ENCODE measurements at regions of chr1 and their contacts with region 1.

Region 1: GRCh38 chr1:40315239-40315794 is 1.8 kb downstream of the COL9A2 start:
- DNase-seq: peak; percentile 84 to 86 (median 85)
- H3K4me3 ChIP-seq: peak overlapping the region; percentile 65 to 74
- H3K4me3 Mint-ChIP-seq: peak overlapping the region; percentile 79 to 95 (median 87)
- H3K27ac ChIP-seq: no peak overlapping the region
- H3K27ac Mint-ChIP-seq: peak overlapping the region in 6 of 7 donors; percentile 15 to 72 (median 46)
- H3K4me1 ChIP-seq: peaks cover 44% of the 10 kb centered on the region
- H3K4me1 Mint-ChIP-seq: peaks cover 14 to 67% (median 35%) of the 10 kb centered on the region in 4 donors
- H3K27me3 ChIP-seq: no peaks in the 10 kb centered on the region
- H3K27me3 Mint-ChIP-seq: peaks cover 10 to 18% of the 10 kb centered on the region in 2 donors

Region 2: DNA sequence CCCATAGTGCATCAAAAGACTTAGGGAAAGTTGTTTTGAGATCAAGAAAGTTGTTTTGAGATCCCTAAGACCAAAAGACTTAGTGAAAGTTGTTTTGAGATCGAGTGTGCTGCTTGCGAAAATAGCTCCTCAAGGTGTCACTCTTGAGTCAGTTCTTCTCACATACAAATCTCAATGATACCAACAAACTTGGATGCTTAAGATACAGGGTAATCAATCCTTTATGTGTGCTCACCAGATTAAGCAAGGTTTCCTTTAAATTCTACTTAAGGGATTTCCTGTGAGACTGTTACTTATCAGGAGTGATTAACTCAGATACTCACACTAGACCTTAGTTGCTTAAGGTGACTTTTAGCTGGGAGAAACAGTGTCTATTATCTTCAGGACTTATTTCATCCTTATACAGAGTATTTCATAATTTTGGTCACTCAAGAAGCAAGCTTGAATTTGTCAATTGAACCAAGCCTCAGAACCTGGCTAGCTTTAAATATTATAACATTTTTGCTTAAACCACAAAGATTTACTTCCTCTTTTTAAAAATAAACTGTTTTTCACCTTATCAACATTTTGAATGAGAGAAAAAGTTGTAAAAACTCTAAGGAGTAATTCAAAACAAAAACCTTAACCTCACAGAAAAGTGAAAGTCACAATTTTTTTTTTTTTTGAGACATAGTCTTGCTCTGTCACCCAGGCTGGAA is 162.1 kb before region 1 on chr1:
- CTCF ChIA-PET with region 1: interaction called, 60 read pairs
- POLR2A ChIA-PET with region 1: interaction called, 8 read pairs
- intact Hi-C with region 1: loop called (anchors 1 kb)
- DNase-seq: peak; percentile 38 to 58 (median 53)
- H3K4me3 ChIP-seq: no peak overlapping the region
- H3K4me3 Mint-ChIP-seq: peak overlapping the region in 5 of 8 donors; percentile 12 to 36 (median 26)
- H3K27ac ChIP-seq: no peak overlapping the region
- H3K27ac Mint-ChIP-seq: peak overlapping the region in 6 of 7 donors; percentile 25 to 77 (median 56)
- H3K4me1 ChIP-seq: no peaks in the 10 kb centered on the region
- H3K4me1 Mint-ChIP-seq: peaks cover 4 to 10% (median 5%) of the 10 kb centered on the region in 4 donors
- H3K27me3 ChIP-seq: no peaks in the 10 kb centered on the region
- H3K27me3 Mint-ChIP-seq: peaks cover 2 to 10% of the 10 kb centered on the region in 2 donors

Region 3: DNA sequence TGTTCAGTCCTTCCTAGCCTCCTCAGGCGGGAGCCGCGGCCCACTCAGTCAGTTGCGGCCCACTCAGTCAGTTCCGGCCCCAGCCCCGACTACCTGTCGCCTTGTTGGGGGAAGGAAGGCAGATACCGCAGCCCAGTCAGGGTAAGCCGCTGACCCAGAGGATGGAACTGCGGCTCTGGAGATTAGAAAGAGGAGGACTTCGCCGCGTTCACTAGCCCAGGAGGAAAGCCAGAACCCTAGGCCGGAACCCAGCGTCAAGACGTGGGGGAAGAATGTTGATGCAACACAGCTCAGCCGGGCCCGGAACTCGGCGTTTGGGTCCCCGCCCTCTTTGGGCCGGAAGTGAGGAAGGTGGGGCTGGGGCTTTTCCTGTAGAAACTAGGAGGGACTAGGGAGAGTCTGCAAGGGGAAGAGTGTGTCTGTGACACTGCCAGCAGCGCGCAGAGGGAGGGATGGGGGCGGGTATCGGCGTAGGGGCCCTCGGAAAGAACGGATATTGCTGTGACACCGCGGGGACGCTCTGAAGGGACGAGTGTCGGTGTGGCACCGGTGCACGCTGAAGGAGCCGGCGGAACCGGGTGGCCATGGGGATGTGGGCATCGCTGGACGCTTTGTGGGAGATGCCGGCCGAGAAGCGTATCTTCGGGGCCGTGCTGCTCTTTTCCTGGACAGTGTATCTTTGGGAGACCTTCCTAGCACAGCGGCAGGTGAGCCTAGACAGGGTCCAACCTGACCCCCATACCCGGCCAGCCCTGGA is 57.5 kb before region 1 on chr1 and contains the start of gene ZMPSTE24:
- CTCF ChIA-PET with region 1: interaction called, 3 read pairs
- POLR2A ChIA-PET with region 1: interaction called, 8 read pairs
- intact Hi-C with region 1: loop called (anchors 1 kb)
- DNase-seq: peak; percentile 95 to 99 (median 96)
- H3K4me3 ChIP-seq: peak within 1 kb of the TSS; percentile 86 to 99
- H3K4me3 Mint-ChIP-seq: peak within 1 kb of the TSS; percentile 92 to 99 (median 96)
- H3K27ac ChIP-seq: peak within 1 kb of the TSS; percentile 98
- H3K27ac Mint-ChIP-seq: peak within 1 kb of the TSS; percentile 98 to 100 (median 99)
- H3K4me1 ChIP-seq: peaks cover 37% of the 10 kb centered on the region
- H3K4me1 Mint-ChIP-seq: peaks cover 25 to 58% (median 38%) of the 10 kb centered on the region in 4 donors
- H3K27me3 ChIP-seq: no peaks in the 10 kb centered on the region
- H3K27me3 Mint-ChIP-seq: no peaks in the 10 kb centered on the region
- total RNA-seq, gene ZMPSTE24: 19.7 to 21.0 TPM

Region 4: DNA sequence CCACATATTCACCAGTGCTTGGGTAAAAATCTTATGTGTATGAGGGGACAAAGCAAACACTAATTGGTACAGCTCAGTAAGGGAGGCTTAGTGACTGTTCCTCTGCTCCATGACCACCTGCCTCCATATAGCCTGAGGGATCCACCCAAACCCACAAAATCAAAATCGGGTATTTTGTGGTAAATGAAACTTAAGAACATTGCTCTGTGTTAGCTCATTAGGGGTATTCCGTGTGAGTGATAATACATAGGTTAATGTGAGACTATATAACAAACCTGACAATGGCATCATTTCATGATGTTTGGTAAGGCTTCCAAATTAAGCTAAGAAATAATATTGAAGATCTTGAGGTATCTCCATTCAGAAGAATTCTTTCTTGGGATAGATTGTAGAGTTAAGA is 24.0 kb before region 1 on chr1:
- CTCF ChIA-PET with region 1: interaction called, 30 read pairs
- POLR2A ChIA-PET with region 1: no interaction called
- intact Hi-C with region 1: no loop called
- DNase-seq: no peak
- H3K4me3 ChIP-seq: no peak overlapping the region
- H3K4me3 Mint-ChIP-seq: no peak overlapping the region
- H3K27ac ChIP-seq: no peak overlapping the region
- H3K27ac Mint-ChIP-seq: peak overlapping the region in 2 of 7 donors; percentile 18 to 78
- H3K4me1 ChIP-seq: no peaks in the 10 kb centered on the region
- H3K4me1 Mint-ChIP-seq: no peaks in the 10 kb centered on the region
- H3K27me3 ChIP-seq: no peaks in the 10 kb centered on the region
- H3K27me3 Mint-ChIP-seq: no peaks in the 10 kb centered on the region

Region 5: DNA sequence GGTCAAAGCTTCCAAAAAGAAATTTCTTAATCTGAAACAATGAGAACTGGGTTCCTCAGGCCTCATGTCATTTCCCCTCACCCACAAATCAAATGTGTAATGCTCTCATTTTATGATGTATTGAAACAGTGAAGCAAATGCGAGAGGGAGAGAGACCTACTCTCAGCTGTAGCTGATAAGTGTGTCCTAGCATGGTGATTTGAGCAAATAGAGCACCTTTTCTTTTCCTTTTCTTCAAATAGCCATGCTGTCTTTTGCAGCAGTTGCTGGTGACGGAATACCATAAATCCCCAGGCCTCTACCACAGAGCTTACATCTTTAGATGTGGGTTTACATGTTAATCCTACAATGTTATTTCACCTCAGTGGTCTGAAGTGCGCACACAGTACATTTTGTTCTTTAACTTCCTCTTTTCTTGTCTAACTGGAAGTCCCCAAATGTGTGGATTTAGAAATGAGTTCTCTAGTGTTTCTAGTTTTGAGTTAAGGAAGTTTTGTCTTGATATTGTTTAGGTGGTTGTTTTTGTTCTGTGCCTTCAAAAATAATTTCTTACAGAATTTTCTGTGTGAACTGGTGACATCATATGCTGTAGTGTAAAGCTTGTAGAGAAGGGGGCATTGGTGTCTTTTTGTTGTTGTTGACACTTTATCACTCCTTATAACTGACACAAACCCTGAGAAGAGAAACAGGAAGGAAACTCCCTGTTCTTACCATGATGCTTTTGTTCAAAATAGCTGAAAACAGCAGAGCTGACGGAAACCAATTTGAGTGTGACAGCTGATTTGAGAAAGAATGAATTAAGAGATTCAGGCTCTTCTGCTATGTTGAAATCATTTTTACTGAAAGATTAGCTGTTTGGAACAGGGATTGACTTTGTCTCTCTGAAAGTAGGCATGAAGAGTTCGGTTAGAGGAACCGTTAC is 70.4 kb after region 1 on chr1:
- CTCF ChIA-PET with region 1: interaction called, 12 read pairs
- POLR2A ChIA-PET with region 1: interaction called, 11 read pairs
- intact Hi-C with region 1: no loop called
- DNase-seq: peak; percentile 90 to 95 (median 93)
- H3K4me3 ChIP-seq: peak overlapping the region; percentile 45 to 67
- H3K4me3 Mint-ChIP-seq: peak overlapping the region; percentile 78 to 94 (median 87)
- H3K27ac ChIP-seq: peak overlapping the region; percentile 99
- H3K27ac Mint-ChIP-seq: peak overlapping the region; percentile 95 to 100 (median 99)
- H3K4me1 ChIP-seq: peaks cover 97% of the 10 kb centered on the region
- H3K4me1 Mint-ChIP-seq: peaks cover 75 to 95% (median 85%) of the 10 kb centered on the region in 4 donors
- H3K27me3 ChIP-seq: no peaks in the 10 kb centered on the region
- H3K27me3 Mint-ChIP-seq: no peaks in the 10 kb centered on the region

Measured in CD4-positive, alpha-beta memory T cell (primary cell).